ENCODE measurements at regions of chr4 and their contacts with region 1.

Region 1: GRCh38 chr4:101009471-101009870 is 337.9 kb downstream of the PPP3CA start:
- DNase-seq: no peak
- ATAC-seq: no peak
- H3K4me3 Mint-ChIP-seq: no peak overlapping the region
- H3K27ac Mint-ChIP-seq: no peak overlapping the region
- H3K4me1 Mint-ChIP-seq: peaks cover 2% of the 10 kb centered on the region
- H3K27me3 Mint-ChIP-seq: peaks cover 2% of the 10 kb centered on the region

Region 2: GRCh38 chr4:100106982-100107381 is 902.5 kb before region 1 on chr4:
- CTCF ChIA-PET with region 1: no interaction called
- POLR2A ChIA-PET with region 1: interaction called, 12 read pairs
- intact Hi-C with region 1: no loop called
- DNase-seq: peak; percentile 24
- ATAC-seq: peak; percentile 76
- H3K4me3 Mint-ChIP-seq: no peak overlapping the region
- H3K27ac Mint-ChIP-seq: no peak overlapping the region
- H3K4me1 Mint-ChIP-seq: peaks cover 15% of the 10 kb centered on the region
- H3K27me3 Mint-ChIP-seq: no peaks in the 10 kb centered on the region

Region 3: DNA sequence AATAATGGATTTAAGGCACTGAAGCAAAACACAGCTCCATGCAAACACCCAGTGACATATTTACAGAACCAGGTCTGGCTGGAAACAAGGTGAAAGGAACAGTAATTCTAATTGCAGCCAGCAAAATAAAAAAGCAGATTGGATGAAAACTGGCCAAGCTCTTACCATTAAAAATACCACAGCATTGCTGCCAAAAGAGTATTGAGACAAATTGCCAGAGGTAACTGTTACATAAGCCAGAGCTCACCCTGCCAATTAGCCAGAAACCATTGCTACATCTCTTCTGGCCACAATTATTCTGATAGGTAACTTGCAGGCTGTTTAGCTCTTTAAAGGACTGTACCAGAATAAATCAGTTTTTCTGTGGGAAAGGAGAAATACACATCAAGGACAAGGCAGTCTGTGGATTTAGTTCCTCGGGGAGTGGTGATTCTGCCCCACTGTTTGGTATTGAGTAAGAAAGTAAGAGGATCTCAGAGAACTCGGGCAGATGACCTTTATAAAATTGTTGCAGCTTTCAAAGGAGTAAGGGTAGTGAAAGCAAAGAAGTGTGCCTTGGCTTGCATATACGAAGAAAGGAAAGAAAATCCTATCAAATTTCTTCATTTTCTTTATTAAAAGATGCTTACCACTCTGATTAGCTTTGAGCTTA is 31.6 kb before region 1 on chr4:
- CTCF ChIA-PET with region 1: no interaction called
- POLR2A ChIA-PET with region 1: no interaction called
- intact Hi-C with region 1: loop called in 1 of 2 experiments (anchors 2 kb)
- DNase-seq: no peak
- ATAC-seq: no peak
- H3K4me3 Mint-ChIP-seq: no peak overlapping the region
- H3K27ac Mint-ChIP-seq: no peak overlapping the region
- H3K4me1 Mint-ChIP-seq: no peaks in the 10 kb centered on the region
- H3K27me3 Mint-ChIP-seq: no peaks in the 10 kb centered on the region

Region 4: GRCh38 chr4:101790521-101791188 is 781.2 kb after region 1 on chr4 and contains the start of gene BANK1:
- CTCF ChIA-PET with region 1: no interaction called
- POLR2A ChIA-PET with region 1: no interaction called
- intact Hi-C with region 1: no loop called
- DNase-seq: peak; percentile 37
- ATAC-seq: peak; percentile 64
- H3K4me3 Mint-ChIP-seq: peak within 1 kb of the TSS; percentile 66
- H3K27ac Mint-ChIP-seq: peak within 1 kb of the TSS; percentile 33
- H3K4me1 Mint-ChIP-seq: peaks cover 10% of the 10 kb centered on the region
- H3K27me3 Mint-ChIP-seq: peaks cover 31% of the 10 kb centered on the region
- total RNA-seq, gene BANK1: not detected